ENCODE measurements at regions of chr1 and their contacts with region 1.

Region 1: GRCh38 chr1:237111807-237112206 is 69.8 kb downstream of the RYR2 start:
- DNase-seq: no peak
- H3K4me3 ChIP-seq: no peak overlapping the region
- CTCF ChIP-seq: no peak

Region 2: DNA sequence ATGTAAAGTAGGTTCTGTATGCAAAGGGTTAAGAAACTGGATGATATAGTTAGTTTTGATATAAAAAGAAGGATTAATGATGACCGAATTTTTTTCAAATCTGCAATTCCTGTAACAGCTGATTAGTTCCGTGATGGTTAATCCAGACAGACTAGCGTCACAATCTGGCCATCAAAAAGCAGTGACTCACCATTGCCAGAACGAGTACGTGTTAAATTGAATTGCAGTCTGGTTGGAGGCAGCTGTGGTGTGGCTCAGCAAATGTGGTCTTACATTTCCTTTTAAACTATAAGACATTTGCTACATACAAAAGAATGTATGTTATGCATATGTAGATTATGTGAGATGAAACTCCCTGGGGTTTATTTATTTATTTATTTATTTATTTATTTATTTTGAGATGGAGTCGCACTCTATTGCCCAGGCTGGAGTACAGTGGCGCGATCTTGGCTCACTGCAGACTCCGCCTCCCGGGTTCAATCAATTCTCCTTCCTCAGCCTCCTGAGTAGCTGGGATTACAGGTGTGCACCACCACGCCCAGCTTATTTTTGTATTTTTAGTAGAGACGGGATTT is 70.0 kb after region 1 on chr1:
- in situ Hi-C with region 1: loop called (anchors 5 kb)
- DNase-seq: no peak
- H3K4me3 ChIP-seq: no peak overlapping the region
- CTCF ChIP-seq: no peak